ENCODE measurements at regions of chr2 and their contacts with region 1.

Region 1: GRCh38 chr2:25558262-25558661 is 115.1 kb downstream of the DTNB start:
- DNase-seq: peak; percentile 85
- ATAC-seq: peak; percentile 44; the same call in 1 of the 2 replicates
- H3K4me3 ChIP-seq: no peak overlapping the region
- H3K27ac ChIP-seq: no peak overlapping the region
- H3K4me1 ChIP-seq: peaks cover 2% of the 10 kb centered on the region
- H3K27me3 ChIP-seq: no peaks in the 10 kb centered on the region
- CTCF ChIP-seq: no peak
- POLR2A ChIP-seq: no peak
- RAD21 ChIP-seq: no peak

Region 2: DNA sequence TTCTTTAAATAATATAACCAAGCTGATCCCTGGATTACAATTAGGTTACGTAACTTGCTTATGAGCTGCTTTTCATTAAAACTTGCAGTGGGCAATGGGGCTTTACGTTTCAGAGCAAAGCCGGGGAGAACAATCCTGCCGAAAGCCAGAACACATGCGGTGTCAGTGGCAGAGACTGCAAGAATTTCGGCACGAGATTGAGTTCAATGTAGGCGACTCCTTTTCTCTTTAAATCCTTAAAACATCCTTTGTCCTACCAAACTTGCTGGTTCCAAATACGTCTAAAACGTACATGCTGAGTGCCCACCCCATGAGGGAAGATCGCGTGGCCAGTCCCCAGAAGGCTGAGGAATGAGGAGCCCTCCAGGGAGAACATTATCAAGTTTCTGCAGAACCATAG is 1104.0 kb before region 1 on chr2:
- CTCF ChIA-PET with region 1: interaction called, 10 read pairs
- POLR2A ChIA-PET with region 1: no interaction called
- dilution Hi-C with region 1: no loop called
- in situ Hi-C with region 1: no loop called
- intact Hi-C with region 1: no loop called
- DNase-seq: peak; percentile 17
- ATAC-seq: 0 out of 2 replicates have a peak, but pooled peaks have one; percentile 22
- H3K4me3 ChIP-seq: 0 out of 2 replicates have a peak overlapping the region, but pooled peaks have one; percentile 26
- H3K27ac ChIP-seq: no peak overlapping the region
- H3K4me1 ChIP-seq: peaks cover 3% of the 10 kb centered on the region; the same call in 1 of the 2 replicates
- H3K27me3 ChIP-seq: peaks cover 4% of the 10 kb centered on the region
- CTCF ChIP-seq: no peak
- POLR2A ChIP-seq: no peak
- RAD21 ChIP-seq: no peak

Region 3: GRCh38 chr2:25437881-25438662 is 120.2 kb before region 1 on chr2:
- CTCF ChIA-PET with region 1: no interaction called
- POLR2A ChIA-PET with region 1: no interaction called
- dilution Hi-C with region 1: no loop called
- in situ Hi-C with region 1: no loop called
- intact Hi-C with region 1: no loop called
- DNase-seq: no peak
- ATAC-seq: no peak
- H3K4me3 ChIP-seq: no peak overlapping the region
- H3K27ac ChIP-seq: no peak overlapping the region
- H3K4me1 ChIP-seq: no peaks in the 10 kb centered on the region
- H3K27me3 ChIP-seq: no peaks in the 10 kb centered on the region
- CTCF ChIP-seq: no peak
- POLR2A ChIP-seq: no peak
- RAD21 ChIP-seq: no peak

Region 4: GRCh38 chr2:26196683-26197418 is 638.6 kb after region 1 on chr2:
- CTCF ChIA-PET with region 1: no interaction called
- POLR2A ChIA-PET with region 1: no interaction called
- dilution Hi-C with region 1: no loop called
- in situ Hi-C with region 1: no loop called
- intact Hi-C with region 1: no loop called
- DNase-seq: no peak
- ATAC-seq: no peak
- H3K4me3 ChIP-seq: no peak overlapping the region
- H3K27ac ChIP-seq: no peak overlapping the region
- H3K4me1 ChIP-seq: no peaks in the 10 kb centered on the region
- H3K27me3 ChIP-seq: no peaks in the 10 kb centered on the region
- CTCF ChIP-seq: no peak
- POLR2A ChIP-seq: no peak
- RAD21 ChIP-seq: no peak

Measured in IMR-90 (cell line).